ENCODE measurements at regions of chr20 and their contacts with region 1.

Region 1: DNA sequence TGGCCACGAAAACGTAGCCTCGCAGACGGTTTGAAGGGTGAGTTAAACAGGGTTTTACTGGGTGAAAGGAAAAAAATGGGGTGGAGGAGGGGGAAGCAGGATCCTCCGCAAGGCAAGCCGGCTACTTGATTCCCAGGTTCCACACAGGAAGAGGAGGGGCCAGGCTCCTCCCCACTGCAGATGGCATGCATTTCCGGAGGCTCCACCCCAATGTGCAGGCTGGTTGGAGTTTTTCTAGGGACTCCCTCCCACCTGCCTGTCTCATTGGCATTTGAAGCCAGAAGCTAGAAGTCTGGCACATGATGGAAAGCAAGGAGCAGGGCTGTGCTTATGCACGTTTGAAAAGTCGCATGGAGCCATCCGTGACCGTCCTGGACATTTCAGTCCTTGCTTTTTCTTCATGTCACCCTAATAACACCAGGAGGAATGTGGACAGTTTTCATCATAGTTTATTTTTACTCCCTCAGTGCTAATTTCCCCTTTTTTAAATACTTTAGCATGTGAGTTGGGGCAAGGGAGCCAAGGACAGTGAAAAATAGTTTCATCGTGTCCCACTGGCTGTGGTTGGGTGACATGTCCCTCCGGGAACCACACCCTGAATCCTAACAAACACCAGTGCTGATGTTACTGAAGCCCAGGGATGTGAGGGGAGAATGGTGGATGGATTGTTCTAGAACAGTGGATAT is 100.1 kb upstream of the INSM1 start:
- DNase-seq: peak; percentile 43 to 58 (median 52)
- H3K4me3 ChIP-seq: peak overlapping the region in 1 of 3 experiments; percentile 54
- H3K4me3 Mint-ChIP-seq: peak overlapping the region; percentile 52 to 85
- H3K27ac ChIP-seq: peak overlapping the region; percentile 76 to 82
- H3K27ac Mint-ChIP-seq: peak overlapping the region; percentile 77 to 97 (median 92)
- H3K4me1 ChIP-seq: peaks cover 60 to 63% of the 10 kb centered on the region in 2 donors
- H3K4me1 Mint-ChIP-seq: peaks cover 53% of the 10 kb centered on the region
- H3K27me3 ChIP-seq: no peaks in the 10 kb centered on the region
- H3K27me3 Mint-ChIP-seq: peaks cover 0 to 4% (median 0%) of the 10 kb centered on the region in 3 donors
- CTCF ChIP-seq: no peak

Region 2: DNA sequence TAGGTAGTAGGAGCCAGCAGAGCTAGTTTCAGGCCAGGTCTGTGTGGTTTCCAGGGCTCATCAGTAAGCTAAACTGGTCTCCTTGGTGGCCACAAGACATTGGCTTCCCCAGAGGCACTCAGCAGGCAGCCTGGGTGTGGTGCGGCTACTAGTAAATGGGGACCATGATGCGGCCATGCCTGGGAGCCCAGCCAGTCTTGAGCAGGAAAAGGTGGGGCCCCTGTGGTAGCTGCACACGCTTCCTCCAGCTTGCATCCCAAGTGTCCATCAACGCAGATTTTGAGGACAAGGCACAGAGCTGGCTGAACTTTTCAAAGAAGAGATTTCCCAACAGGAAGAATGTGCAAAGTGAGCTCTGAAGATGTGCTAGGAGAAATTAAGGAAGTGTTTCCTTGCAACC is 358.1 kb before region 1 on chr20:
- intact Hi-C with region 1: loop called in 1 of 2 experiments (anchors 10 kb)
- DNase-seq: peak in 2 of 3 donors; percentile 57 to 61
- H3K4me3 ChIP-seq: peak overlapping the region in 1 of 3 experiments; percentile 42
- H3K4me3 Mint-ChIP-seq: peak overlapping the region; percentile 34 to 67
- H3K27ac ChIP-seq: peak overlapping the region; percentile 73 to 74
- H3K27ac Mint-ChIP-seq: peak overlapping the region; percentile 81 to 90 (median 88)
- H3K4me1 ChIP-seq: peaks cover 75 to 77% of the 10 kb centered on the region in 2 donors
- H3K4me1 Mint-ChIP-seq: peaks cover 76% of the 10 kb centered on the region
- H3K27me3 ChIP-seq: no peaks in the 10 kb centered on the region
- H3K27me3 Mint-ChIP-seq: peaks cover 0 to 4% (median 4%) of the 10 kb centered on the region in 3 donors
- CTCF ChIP-seq: no peak

Region 3: DNA sequence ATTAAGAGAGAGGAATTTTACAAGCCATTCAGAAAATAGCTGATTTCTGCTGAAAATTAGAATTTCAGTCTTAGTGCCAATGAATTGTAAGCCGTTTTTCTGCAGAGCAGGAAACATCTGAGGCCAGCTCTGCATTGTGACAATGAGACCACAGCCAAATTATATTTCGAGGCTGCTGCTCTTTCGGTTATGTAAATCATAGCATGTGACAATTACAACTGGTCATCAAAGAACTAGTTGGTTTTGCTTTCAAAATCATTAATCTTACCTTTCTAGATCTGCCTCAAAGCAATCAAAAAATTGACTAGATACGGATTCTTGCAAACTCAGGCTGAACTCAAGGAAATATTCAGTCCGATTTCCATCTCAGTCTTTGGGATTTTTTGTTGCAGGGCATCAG is 66.7 kb after region 1 on chr20:
- intact Hi-C with region 1: loop called in 1 of 2 experiments (anchors 5 kb)
- DNase-seq: peak in 1 of 3 donors; percentile 20
- H3K4me3 ChIP-seq: peak overlapping the region in 1 of 3 experiments; percentile 47
- H3K4me3 Mint-ChIP-seq: peak overlapping the region; percentile 42 to 58
- H3K27ac ChIP-seq: peak overlapping the region; percentile 25 to 61
- H3K27ac Mint-ChIP-seq: peak overlapping the region; percentile 57 to 91 (median 87)
- H3K4me1 ChIP-seq: peaks cover 44 to 48% of the 10 kb centered on the region in 2 donors
- H3K4me1 Mint-ChIP-seq: peaks cover 42% of the 10 kb centered on the region
- H3K27me3 ChIP-seq: no peaks in the 10 kb centered on the region
- H3K27me3 Mint-ChIP-seq: no peaks in the 10 kb centered on the region
- CTCF ChIP-seq: no peak